OCI-LY7 (cell line): ENCODE measurements at regions of chr10 and their contacts with region 1.

Region 1: DNA sequence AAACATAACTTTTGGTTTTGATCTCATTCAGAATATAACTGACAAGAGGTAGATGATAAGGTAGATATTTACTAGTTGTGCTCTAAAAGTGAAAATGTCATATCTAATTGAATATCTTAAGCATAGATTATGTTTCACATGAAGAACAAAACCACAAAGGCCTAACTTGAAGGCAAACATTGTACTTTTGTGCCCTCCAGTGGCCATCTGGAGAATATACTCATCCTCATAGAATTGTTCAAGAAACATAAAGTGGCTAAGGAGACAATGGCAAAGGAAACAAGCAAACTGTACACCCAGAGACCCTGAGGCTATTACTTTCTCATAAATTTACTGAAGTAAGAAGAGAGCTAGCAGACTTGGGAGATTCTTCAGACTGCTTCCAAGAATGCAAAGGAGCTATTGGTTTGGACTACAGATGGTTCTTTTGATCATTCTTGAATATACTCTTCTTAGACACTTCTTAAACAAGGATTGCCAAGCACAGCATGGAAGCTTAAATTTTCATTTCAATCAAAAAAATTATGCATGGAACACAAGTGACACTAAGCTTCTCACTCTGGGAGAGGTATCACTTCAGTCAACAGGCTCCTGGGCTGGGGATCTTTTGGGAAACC is 98.2 kb upstream of the DKK1 start:
- DNase-seq: peak; percentile 68
- H3K4me3 ChIP-seq: no peak overlapping the region
- H3K27ac ChIP-seq: no peak overlapping the region
- H3K4me1 ChIP-seq: peaks cover 21% of the 10 kb centered on the region
- CTCF ChIP-seq: peak; percentile 91

Region 2: DNA sequence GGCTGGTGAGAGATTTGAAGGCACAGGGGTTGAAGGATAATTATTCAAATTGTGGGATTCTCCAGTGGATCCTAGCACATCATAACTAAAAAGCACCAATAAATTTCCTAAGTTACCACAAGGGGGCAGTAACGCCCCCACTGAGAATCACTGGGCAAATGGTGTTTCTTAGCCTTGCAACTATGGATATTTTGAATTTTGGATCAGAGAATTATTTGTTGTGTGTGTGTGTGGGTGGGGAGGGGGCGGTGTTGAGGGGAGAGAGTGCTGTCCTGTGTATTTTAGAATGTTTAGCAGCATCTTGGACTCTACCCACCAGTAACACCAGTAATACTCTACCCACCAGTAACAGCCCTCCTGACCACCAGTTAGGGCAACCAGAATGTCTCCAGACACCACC is 1204.9 kb before region 1 on chr10:
- CTCF ChIA-PET with region 1: no interaction called
- POLR2A ChIA-PET with region 1: no interaction called
- intact Hi-C with region 1: loop called (anchors 2 kb)
- DNase-seq: peak; percentile 47
- H3K4me3 ChIP-seq: no peak overlapping the region
- H3K27ac ChIP-seq: no peak overlapping the region
- H3K4me1 ChIP-seq: no peaks in the 10 kb centered on the region
- CTCF ChIP-seq: peak; percentile 95

Region 3: GRCh38 chr10:51063659-51064535 is 1152.0 kb before region 1 on chr10:
- CTCF ChIA-PET with region 1: no interaction called
- POLR2A ChIA-PET with region 1: no interaction called
- intact Hi-C with region 1: loop called (anchors 5 kb)
- DNase-seq: peak; percentile 16
- H3K4me3 ChIP-seq: no peak overlapping the region
- H3K27ac ChIP-seq: no peak overlapping the region
- H3K4me1 ChIP-seq: no peaks in the 10 kb centered on the region
- CTCF ChIP-seq: peak; percentile 75

Region 4: DNA sequence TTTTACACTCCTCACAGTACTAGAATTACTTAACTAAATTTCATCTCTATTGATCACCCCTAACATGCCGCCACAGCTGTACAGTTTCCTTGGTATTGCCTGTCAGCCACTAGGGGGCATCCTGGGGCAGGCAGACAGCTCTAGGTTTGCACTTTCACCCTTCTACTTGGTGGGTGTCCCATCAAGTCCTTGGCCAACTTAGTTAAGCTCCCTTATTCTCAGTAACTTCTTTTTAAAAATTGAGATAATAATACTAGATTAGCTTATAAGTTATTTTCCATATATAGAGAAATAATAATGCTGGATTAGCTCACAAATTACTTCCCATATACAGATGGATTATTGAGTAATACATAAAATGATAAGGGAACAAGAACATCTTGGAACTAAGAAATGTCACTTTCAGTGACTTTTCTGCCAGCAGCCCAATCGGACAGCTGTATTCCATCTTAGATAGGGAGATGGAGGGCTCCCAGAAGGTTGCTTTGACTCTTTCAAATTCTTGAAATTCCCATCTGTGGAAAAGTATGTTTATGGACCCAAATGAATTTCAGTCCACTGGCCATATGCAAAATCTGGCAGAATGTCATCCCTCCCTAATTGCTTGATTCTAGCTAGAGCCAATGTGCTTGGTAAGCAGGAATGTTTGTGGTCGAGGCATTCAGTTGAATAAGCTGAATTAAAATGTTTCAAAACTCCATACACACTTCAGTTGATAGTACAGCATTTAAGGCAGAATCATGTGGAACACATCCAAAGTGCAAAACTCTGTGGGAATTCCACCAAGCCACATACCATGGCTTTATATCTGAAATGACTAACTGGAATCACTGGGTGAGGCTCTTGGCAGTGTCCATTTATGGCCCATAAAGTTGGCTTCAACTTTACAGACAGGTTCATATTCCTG is 826.2 kb before region 1 on chr10:
- CTCF ChIA-PET with region 1: interaction called, 3 read pairs
- POLR2A ChIA-PET with region 1: no interaction called
- intact Hi-C with region 1: loop called (anchors 2 kb)
- DNase-seq: peak; percentile 51
- H3K4me3 ChIP-seq: no peak overlapping the region
- H3K27ac ChIP-seq: no peak overlapping the region
- H3K4me1 ChIP-seq: no peaks in the 10 kb centered on the region
- CTCF ChIP-seq: peak; percentile 92

Region 5: GRCh38 chr10:52488606-52489485 is 273.0 kb after region 1 on chr10:
- CTCF ChIA-PET with region 1: no interaction called
- POLR2A ChIA-PET with region 1: no interaction called
- intact Hi-C with region 1: loop called (anchors 5 kb)
- DNase-seq: peak; percentile 36
- H3K4me3 ChIP-seq: no peak overlapping the region
- H3K27ac ChIP-seq: no peak overlapping the region
- H3K4me1 ChIP-seq: no peaks in the 10 kb centered on the region
- CTCF ChIP-seq: peak; percentile 83